ENCODE measurements at regions of chr9 and their contacts with region 1.

Region 1: DNA sequence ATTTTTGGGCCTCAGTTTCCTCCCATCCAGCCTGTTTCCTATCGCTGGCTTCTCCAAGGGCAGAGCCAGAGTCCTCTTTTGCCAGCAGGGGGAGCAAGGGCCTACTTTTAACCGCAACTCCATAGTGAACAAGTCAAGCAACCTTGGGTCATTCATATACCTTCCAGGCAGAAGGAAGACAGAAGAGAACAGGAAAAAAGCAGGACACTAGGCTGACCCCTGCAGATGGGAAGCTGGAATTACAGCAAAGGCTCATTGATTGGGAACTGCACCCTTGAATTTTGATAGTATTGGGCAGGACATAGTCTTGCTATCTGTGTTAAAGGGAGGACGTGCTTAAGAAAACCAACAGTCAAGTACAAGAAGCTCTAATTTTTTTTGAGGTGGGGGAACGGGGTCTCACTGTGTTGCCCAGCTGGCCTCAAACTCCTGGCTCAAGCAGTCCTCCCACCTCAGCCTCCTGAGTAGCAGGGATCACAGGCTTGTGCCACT is 30.1 kb downstream of the QRFP start:
- DNase-seq: peak in 4 of 5 donors; percentile 19 to 34 (median 32)
- H3K4me3 ChIP-seq: no peak overlapping the region
- H3K4me3 Mint-ChIP-seq: no peak overlapping the region
- H3K27ac ChIP-seq: no peak overlapping the region
- H3K27ac Mint-ChIP-seq: peak overlapping the region in 2 of 7 donors; percentile 68 to 79
- H3K4me1 ChIP-seq: no peaks in the 10 kb centered on the region
- H3K4me1 Mint-ChIP-seq: peaks cover 4 to 7% (median 6%) of the 10 kb centered on the region in 4 donors
- H3K27me3 ChIP-seq: no peaks in the 10 kb centered on the region
- H3K27me3 Mint-ChIP-seq: no peaks in the 10 kb centered on the region

Region 2: GRCh38 chr9:130433168-130433946 is 433.2 kb before region 1 on chr9:
- CTCF ChIA-PET with region 1: no interaction called
- POLR2A ChIA-PET with region 1: no interaction called
- intact Hi-C with region 1: no loop called
- DNase-seq: no peak
- H3K4me3 ChIP-seq: no peak overlapping the region
- H3K4me3 Mint-ChIP-seq: peak overlapping the region in 1 of 8 donors; percentile 58
- H3K27ac ChIP-seq: no peak overlapping the region
- H3K27ac Mint-ChIP-seq: no peak overlapping the region
- H3K4me1 ChIP-seq: no peaks in the 10 kb centered on the region
- H3K4me1 Mint-ChIP-seq: peaks cover 0 to 8% (median under 1%) of the 10 kb centered on the region in 4 donors
- H3K27me3 ChIP-seq: no peaks in the 10 kb centered on the region
- H3K27me3 Mint-ChIP-seq: peaks cover 14 to 17% of the 10 kb centered on the region in 2 donors

Region 3: DNA sequence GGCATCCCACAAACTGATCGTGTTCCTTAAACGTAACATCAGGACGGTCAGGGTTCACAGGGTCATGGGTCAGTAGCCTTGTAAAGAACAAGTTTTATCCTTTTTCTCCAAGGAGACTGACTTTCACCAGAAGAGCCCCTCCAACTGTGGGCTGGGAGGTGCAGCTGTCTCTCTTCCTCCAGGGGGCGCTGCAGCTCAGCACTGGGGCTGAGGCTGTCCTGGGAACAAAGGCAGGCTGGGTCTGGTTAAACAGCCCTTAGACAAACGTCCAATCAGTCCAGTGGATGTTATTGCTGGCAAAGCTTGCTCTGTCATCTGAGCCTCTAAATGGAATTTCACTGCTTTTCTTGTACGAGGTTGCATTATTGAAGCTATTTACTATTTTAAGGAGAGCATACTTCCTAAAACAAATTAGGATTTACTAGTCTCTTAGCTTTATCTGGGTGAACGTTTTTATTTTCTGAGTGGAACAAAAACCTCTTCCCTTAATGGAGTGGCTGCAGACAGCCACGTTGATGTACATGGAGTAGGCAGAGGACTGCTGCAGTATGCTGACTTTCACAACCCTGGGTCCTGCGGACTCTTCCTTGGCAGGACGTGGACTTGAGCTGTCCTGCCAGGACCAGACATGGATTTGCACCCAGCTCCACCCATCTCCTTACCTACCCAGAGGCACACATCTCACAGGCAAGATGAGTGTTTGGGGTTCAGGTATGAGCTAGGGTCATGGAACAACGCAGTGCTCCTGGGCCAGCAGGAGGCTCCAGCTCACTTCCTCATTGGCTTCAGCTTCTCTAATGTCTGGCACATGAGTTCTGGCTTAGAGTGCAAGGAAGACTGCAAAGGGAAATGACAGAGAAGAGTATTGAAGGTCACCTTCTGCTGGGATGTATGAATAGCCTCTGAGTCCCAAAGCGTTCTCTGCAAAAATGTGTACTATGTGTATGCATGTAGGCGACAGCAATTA is 165.2 kb before region 1 on chr9:
- CTCF ChIA-PET with region 1: interaction called, 137 read pairs
- POLR2A ChIA-PET with region 1: no interaction called
- intact Hi-C with region 1: loop called (anchors 1 kb)
- DNase-seq: peak; percentile 57 to 68 (median 59)
- H3K4me3 ChIP-seq: no peak overlapping the region
- H3K4me3 Mint-ChIP-seq: no peak overlapping the region
- H3K27ac ChIP-seq: no peak overlapping the region
- H3K27ac Mint-ChIP-seq: no peak overlapping the region
- H3K4me1 ChIP-seq: peaks cover 3% of the 10 kb centered on the region
- H3K4me1 Mint-ChIP-seq: peaks cover 11 to 21% (median 14%) of the 10 kb centered on the region in 4 donors
- H3K27me3 ChIP-seq: no peaks in the 10 kb centered on the region
- H3K27me3 Mint-ChIP-seq: no peaks in the 10 kb centered on the region

Region 4: DNA sequence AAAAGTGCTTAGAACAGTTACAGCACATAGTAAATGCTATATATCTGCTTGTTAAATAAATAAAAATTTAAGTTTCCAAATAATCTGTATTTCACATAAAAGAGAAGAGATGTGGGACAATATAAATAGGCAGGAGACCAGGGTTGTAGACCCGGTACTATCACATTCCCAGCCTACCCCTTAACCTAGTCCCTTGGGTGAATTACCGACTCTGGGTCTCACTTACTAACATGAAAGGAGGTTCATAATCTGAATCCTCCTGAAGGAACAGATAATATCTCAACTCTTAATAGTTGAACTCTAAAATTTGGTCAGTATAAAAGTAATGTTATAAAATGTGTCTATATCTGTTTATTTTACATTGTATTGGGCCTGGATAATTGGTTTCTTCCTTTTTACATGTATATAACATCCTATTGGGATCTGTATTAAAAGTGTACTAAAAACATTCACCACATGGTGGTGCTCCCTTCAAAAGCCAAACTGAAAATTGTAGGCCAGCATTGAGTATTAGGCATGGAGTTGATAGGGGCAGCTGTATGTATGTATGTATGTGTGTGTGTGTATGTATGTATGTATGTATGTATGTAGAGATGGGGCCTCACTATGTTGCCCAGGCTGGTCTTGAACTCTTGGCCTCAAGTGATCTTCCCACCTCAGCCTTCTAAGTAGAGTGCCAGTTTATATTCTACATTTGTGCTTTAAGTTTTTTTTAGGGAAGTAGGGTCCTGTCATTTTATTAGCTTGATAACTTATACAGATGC is 95.7 kb before region 1 on chr9:
- CTCF ChIA-PET with region 1: interaction called, 6 read pairs
- POLR2A ChIA-PET with region 1: interaction called, 3 read pairs
- intact Hi-C with region 1: loop called (anchors 1 kb)
- DNase-seq: peak in 4 of 5 donors; percentile 11 to 24 (median 22)
- H3K4me3 ChIP-seq: no peak overlapping the region
- H3K4me3 Mint-ChIP-seq: no peak overlapping the region
- H3K27ac ChIP-seq: no peak overlapping the region
- H3K27ac Mint-ChIP-seq: no peak overlapping the region
- H3K4me1 ChIP-seq: no peaks in the 10 kb centered on the region
- H3K4me1 Mint-ChIP-seq: peaks cover 22 to 38% (median 34%) of the 10 kb centered on the region in 4 donors
- H3K27me3 ChIP-seq: no peaks in the 10 kb centered on the region
- H3K27me3 Mint-ChIP-seq: no peaks in the 10 kb centered on the region

Region 5: DNA sequence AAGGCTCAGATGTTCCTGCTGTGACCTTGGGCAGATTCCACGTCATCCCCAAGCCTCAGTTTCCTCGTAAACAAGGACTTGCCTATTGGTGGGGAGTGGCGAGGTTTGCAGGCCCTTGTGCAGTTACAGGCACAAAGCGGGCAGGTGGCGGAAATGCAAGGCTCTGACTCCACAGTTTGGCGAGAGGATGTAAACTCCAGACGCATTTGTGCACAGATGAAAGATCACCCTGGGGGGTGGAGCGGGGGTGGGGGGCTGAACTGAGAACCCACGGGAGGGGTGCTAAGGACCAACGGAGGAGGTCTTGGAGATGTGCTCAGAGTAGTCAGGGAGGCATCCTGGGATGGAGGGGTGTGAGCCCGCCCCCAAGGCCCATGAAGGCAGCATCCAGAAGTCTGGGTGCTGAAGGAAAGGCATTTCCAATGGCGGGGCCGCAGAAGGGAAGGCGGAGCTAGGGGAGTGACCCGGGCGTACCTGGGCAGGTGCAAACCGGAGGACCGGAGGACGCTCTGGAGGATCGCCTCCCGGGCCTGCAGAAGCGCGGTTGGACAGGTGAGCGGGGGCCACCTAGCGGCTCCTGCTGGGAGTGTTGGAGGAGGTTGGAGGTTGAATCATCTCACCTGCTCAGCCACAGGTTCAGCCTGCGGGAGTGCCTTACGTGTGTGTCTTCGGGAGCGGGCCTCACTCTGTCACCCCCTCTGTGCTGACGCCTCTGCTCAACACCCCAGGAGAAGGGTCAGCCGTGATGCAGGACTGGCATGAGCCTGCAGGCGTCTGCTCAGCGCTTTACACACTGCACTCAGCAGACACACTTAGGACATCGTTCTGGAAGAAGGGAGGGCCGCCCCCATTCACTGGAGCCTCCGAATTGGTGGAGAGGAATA is 74.4 kb after region 1 on chr9:
- CTCF ChIA-PET with region 1: no interaction called
- POLR2A ChIA-PET with region 1: no interaction called
- intact Hi-C with region 1: loop called (anchors 2 kb)
- DNase-seq: peak; percentile 50 to 68 (median 58)
- H3K4me3 ChIP-seq: no peak overlapping the region
- H3K4me3 Mint-ChIP-seq: peak overlapping the region in 5 of 8 donors; percentile 52 to 77 (median 64)
- H3K27ac ChIP-seq: no peak overlapping the region
- H3K27ac Mint-ChIP-seq: no peak overlapping the region
- H3K4me1 ChIP-seq: peaks cover 12% of the 10 kb centered on the region
- H3K4me1 Mint-ChIP-seq: peaks cover 3 to 18% (median 10%) of the 10 kb centered on the region in 4 donors
- H3K27me3 ChIP-seq: peaks cover 37% of the 10 kb centered on the region
- H3K27me3 Mint-ChIP-seq: peaks cover 27 to 42% of the 10 kb centered on the region in 2 donors

Region 6: GRCh38 chr9:131138676-131139075 is 272.2 kb after region 1 on chr9:
- CTCF ChIA-PET with region 1: no interaction called
- POLR2A ChIA-PET with region 1: no interaction called
- intact Hi-C with region 1: no loop called
- DNase-seq: no peak
- H3K4me3 ChIP-seq: no peak overlapping the region
- H3K4me3 Mint-ChIP-seq: no peak overlapping the region
- H3K27ac ChIP-seq: no peak overlapping the region
- H3K27ac Mint-ChIP-seq: no peak overlapping the region
- H3K4me1 ChIP-seq: no peaks in the 10 kb centered on the region
- H3K4me1 Mint-ChIP-seq: peaks cover 0 to 10% (median 0%) of the 10 kb centered on the region in 4 donors
- H3K27me3 ChIP-seq: no peaks in the 10 kb centered on the region
- H3K27me3 Mint-ChIP-seq: no peaks in the 10 kb centered on the region

Measured in CD4-positive, alpha-beta memory T cell (primary cell).